OCI-LY7 (cell line): ENCODE measurements at regions of chr15 and their contacts with region 1.

Region 1: DNA sequence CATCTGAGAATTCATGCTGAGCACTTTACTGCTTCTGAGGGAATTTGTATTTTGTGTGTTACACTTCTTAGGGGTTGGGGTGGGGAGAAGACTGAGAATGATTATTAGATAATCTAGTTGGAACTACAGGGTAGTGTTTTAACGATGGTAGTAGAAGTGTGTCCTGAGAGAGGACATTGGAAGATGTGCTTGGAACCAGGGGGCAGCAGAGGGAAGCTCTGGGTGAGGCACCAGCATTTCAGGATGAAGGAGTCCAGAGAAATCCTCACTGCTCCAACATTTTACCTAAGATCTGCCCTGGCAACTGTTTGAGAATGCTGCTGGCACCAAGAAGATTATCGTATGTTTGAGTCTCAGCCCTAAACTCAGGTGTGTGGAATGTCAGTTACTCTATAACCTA is 145.5 kb downstream of the SQOR start:
- DNase-seq: no peak
- H3K4me3 ChIP-seq: no peak overlapping the region
- H3K27ac ChIP-seq: no peak overlapping the region
- H3K4me1 ChIP-seq: peaks cover 74% of the 10 kb centered on the region
- CTCF ChIP-seq: no peak

Region 2: DNA sequence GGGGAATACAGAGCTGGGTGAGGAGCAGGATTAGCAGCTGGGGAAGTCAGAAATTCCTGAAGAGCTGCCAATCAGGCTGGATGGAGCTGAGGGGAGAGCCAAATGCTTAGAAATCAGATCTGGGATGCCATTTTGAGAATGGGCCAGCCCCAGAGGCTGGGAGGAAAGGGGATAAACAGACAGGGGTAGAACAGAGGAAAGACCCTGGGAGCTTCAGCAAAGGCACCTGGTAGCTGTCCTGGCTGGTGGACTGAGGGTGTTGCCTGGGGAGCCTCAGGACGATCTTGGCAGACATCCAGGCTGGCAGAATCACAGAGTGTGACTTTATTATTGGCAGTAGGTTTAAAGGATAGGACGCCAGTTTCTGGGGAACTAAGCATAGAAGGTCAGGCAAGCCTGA is 47.7 kb before region 1 on chr15:
- CTCF ChIA-PET with region 1: interaction called, 3 read pairs
- POLR2A ChIA-PET with region 1: interaction called, 37 read pairs
- intact Hi-C with region 1: loop called (anchors 1 kb)
- DNase-seq: no peak
- H3K4me3 ChIP-seq: no peak overlapping the region
- H3K27ac ChIP-seq: peak overlapping the region; percentile 99
- H3K4me1 ChIP-seq: peaks cover 75% of the 10 kb centered on the region
- CTCF ChIP-seq: no peak

Region 3: GRCh38 chr15:45759936-45760335 is 20.4 kb before region 1 on chr15:
- CTCF ChIA-PET with region 1: no interaction called
- POLR2A ChIA-PET with region 1: interaction called, 18 read pairs
- intact Hi-C with region 1: no loop called
- DNase-seq: no peak
- H3K4me3 ChIP-seq: no peak overlapping the region
- H3K27ac ChIP-seq: no peak overlapping the region
- H3K4me1 ChIP-seq: peaks cover 4% of the 10 kb centered on the region
- CTCF ChIP-seq: no peak

Region 4: DNA sequence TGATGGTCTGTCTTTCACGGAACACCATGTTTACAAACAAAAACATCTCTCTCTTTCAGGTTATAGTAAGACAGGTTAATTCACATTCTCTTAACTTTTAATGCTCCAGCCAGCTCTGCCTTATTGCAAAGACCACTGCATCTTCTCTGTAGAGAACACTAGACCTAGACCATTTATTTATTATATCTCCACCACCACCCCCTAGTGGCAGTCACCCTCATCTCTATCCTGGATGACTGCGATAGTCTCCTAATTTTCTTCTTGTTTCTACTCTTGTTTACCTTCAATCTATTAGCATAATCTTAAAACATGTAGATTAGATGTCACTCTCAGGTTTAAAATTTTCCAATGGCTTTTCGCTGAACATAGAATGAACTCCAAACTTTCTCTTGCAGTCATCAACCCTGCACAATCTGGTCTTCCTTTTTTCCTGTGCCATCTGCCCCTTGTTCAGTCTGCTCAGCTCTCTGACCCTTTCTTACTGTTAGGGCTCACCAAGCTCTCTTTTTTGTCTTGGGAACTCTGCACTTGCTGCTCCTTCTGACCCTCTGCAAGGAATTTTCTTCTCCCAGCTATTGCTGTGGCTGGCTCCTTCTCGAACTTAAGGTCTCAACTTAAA is 10.1 kb after region 1 on chr15:
- CTCF ChIA-PET with region 1: interaction called, 5 read pairs
- POLR2A ChIA-PET with region 1: interaction called, 12 read pairs
- intact Hi-C with region 1: no loop called
- DNase-seq: peak; percentile 74
- H3K4me3 ChIP-seq: no peak overlapping the region
- H3K27ac ChIP-seq: no peak overlapping the region
- H3K4me1 ChIP-seq: peaks cover 8% of the 10 kb centered on the region
- CTCF ChIP-seq: peak; percentile 93